Caco-2 (cell line): ENCODE measurements at regions of chr12 and their contacts with region 1.

Region 1: GRCh38 chr12:24268663-24269186 is 319.3 kb upstream of the SOX5 start:
- DNase-seq: no peak
- H3K4me3 ChIP-seq: no peak overlapping the region
- H3K4me3 Mint-ChIP-seq: no peak overlapping the region
- H3K27ac Mint-ChIP-seq: no peak overlapping the region
- H3K4me1 ChIP-seq: 0 out of 2 replicates have a peak, but pooled peaks cover 5% of the 10 kb centered on the region
- H3K4me1 Mint-ChIP-seq: no peaks in the 10 kb centered on the region
- H3K27me3 ChIP-seq: no peaks in the 10 kb centered on the region
- H3K27me3 Mint-ChIP-seq: no peaks in the 10 kb centered on the region
- CTCF ChIP-seq: peak; percentile 1 to 53

Region 2: GRCh38 chr12:23006413-23006812 is 1262.3 kb before region 1 on chr12:
- CTCF ChIA-PET with region 1: no interaction called
- POLR2A ChIA-PET with region 1: no interaction called
- intact Hi-C with region 1: no loop called
- DNase-seq: no peak
- H3K4me3 ChIP-seq: no peak overlapping the region
- H3K4me3 Mint-ChIP-seq: no peak overlapping the region
- H3K27ac Mint-ChIP-seq: no peak overlapping the region
- H3K4me1 ChIP-seq: no peaks in the 10 kb centered on the region
- H3K4me1 Mint-ChIP-seq: no peaks in the 10 kb centered on the region
- H3K27me3 ChIP-seq: no peaks in the 10 kb centered on the region
- H3K27me3 Mint-ChIP-seq: no peaks in the 10 kb centered on the region
- CTCF ChIP-seq: no peak

Region 3: GRCh38 chr12:24352363-24352762 is 83.6 kb after region 1 on chr12:
- CTCF ChIA-PET with region 1: no interaction called
- POLR2A ChIA-PET with region 1: no interaction called
- intact Hi-C with region 1: loop called (anchors 5 kb)
- DNase-seq: no peak
- H3K4me3 ChIP-seq: no peak overlapping the region
- H3K4me3 Mint-ChIP-seq: no peak overlapping the region
- H3K27ac Mint-ChIP-seq: no peak overlapping the region
- H3K4me1 ChIP-seq: no peaks in the 10 kb centered on the region
- H3K4me1 Mint-ChIP-seq: peaks cover 6% of the 10 kb centered on the region
- H3K27me3 ChIP-seq: no peaks in the 10 kb centered on the region
- H3K27me3 Mint-ChIP-seq: no peaks in the 10 kb centered on the region
- CTCF ChIP-seq: no peak